ENCODE measurements at regions of chr12 and their contacts with region 1.

Region 1: DNA sequence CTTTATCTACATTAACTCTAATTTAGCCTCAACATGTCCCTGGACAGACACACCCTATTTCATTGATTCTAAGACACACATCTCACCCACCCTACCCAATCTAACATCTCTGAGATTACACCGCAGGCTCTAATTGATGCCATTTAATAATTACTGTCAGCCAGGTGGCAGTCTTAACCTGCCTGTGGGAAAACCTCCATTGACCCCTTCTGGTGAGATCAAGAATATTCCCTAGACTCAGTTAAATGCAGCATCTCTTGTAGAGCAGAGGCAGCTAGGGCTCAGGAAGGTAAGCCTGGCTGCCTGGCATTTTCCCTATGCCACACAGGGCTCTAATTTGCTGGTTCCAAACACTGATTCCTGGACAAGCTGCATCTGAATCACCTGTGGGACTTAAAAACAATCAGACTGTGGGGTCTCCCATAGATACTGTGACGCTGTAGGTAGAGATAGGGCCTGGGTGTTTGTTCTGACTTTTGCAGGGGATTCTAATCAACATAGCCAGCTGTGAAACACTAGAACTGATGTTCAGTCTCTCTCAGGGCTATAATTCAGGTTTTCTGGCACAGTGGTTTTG is 14.3 kb downstream of the MCRS1 start:
- DNase-seq: no peak
- ATAC-seq: no peak
- H3K4me3 ChIP-seq: no peak overlapping the region
- H3K27ac ChIP-seq: no peak overlapping the region
- H3K4me1 ChIP-seq: peaks cover 19 to 22% of the 10 kb centered on the region in 2 donors
- H3K27me3 ChIP-seq: peaks cover 0 to 10% (median 0%) of the 10 kb centered on the region in 3 donors
- CTCF ChIP-seq: peak in 3 of 5 experiments; percentile 7 to 39 (median 15)
- POLR2A ChIP-seq: no peak

Region 2: GRCh38 chr12:49422114-49422513 is 131.5 kb before region 1 on chr12:
- in situ Hi-C with region 1: no loop called
- intact Hi-C with region 1: no loop called
- DNase-seq: no peak
- ATAC-seq: no peak
- H3K4me3 ChIP-seq: no peak overlapping the region
- H3K27ac ChIP-seq: no peak overlapping the region
- H3K4me1 ChIP-seq: peaks cover 0 to 13% of the 10 kb centered on the region in 2 donors
- H3K27me3 ChIP-seq: no peaks in the 10 kb centered on the region
- CTCF ChIP-seq: no peak
- POLR2A ChIP-seq: no peak

Region 3: GRCh38 chr12:49580572-49581535 is 27.3 kb after region 1 on chr12:
- in situ Hi-C with region 1: no loop called
- intact Hi-C with region 1: loop called (anchors 1 kb)
- DNase-seq: peak; percentile 47 to 74
- ATAC-seq: peak; percentile 84 to 95
- H3K4me3 ChIP-seq: no peak overlapping the region
- H3K27ac ChIP-seq: peak overlapping the region in 3 of 4 donors; percentile 12 to 23 (median 20)
- H3K4me1 ChIP-seq: peaks cover 5 to 19% of the 10 kb centered on the region in 2 donors
- H3K27me3 ChIP-seq: no peaks in the 10 kb centered on the region
- CTCF ChIP-seq: peak; percentile 71 to 87 (median 72)
- POLR2A ChIP-seq: no peak

Region 4: GRCh38 chr12:49740930-49741881 is 187.6 kb after region 1 on chr12 and contains the start of gene TMBIM6:
- in situ Hi-C with region 1: no loop called
- intact Hi-C with region 1: no loop called
- DNase-seq: peak; percentile 100
- ATAC-seq: peak; percentile 98 to 99
- H3K4me3 ChIP-seq: peak within 1 kb of the TSS; percentile 80 to 100 (median 88)
- H3K27ac ChIP-seq: peak within 1 kb of the TSS; percentile 97 to 100 (median 98)
- H3K4me1 ChIP-seq: peaks cover 31 to 38% of the 10 kb centered on the region in 2 donors
- H3K27me3 ChIP-seq: no peaks in the 10 kb centered on the region
- CTCF ChIP-seq: peak; percentile 91 to 98 (median 95)
- POLR2A ChIP-seq: peak; percentile 98 to 99
- total RNA-seq, gene TMBIM6: 181 to 310 (median 224) TPM

Measured in gastrocnemius medialis (tissue), 4 donors.